Left cardiac atrium (tissue), 4 donors: ENCODE measurements at regions of chr9 and their contacts with region 1.

Region 1: DNA sequence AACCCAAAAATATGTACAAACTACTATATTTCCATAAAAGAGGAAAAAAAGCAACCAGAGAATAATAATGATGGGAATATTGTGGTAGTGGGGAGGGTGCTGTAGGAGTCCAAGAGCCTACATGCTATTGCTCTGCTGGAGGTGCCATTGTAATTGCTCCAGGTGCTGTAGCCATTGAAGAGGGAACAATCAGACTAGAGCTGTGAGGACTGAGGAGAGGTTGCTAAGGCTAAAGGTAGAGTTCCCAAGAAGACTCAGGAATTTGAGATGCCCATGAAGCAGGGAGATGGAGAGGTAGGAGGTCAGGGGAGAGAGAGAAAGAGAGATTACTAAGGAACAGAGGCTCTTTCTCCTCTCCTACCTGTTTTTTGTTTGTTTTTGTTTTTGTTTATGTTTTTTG is 394.0 kb downstream of the DMRTA1 start:
- DNase-seq: no peak
- ATAC-seq: no peak

Region 2: DNA sequence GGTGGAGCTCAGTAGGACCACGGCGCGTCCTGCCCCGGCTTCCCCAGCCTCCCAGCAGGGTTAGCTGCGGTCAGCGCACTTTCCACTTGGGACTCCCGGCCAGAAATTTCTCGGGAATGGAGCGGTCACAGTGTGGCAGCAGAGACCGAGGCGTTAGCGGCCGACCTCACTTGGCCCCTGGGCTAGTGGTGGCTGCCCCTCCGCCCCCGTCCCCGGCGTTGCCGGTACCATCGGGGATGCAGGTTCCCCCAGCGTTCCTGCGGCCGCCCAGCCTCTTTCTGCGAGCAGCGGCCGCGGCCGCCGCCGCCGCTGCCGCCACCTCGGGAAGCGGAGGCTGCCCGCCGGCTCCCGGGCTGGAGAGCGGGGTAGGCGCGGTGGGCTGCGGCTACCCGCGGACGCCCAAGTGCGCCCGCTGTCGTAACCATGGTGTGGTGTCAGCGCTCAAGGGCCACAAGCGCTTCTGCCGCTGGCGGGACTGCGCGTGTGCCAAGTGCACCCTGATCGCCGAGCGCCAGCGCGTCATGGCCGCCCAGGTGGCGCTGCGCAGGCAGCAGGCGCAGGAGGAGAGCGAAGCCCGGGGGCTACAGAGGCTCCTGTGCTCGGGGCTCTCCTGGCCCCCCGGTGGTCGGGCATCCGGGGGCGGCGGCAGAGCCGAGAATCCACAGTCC is 393.6 kb before region 1 on chr9:
- intact Hi-C with region 1: no loop called
- DNase-seq: peak; percentile 55
- ATAC-seq: peak; percentile 84 to 92

Region 3: GRCh38 chr9:22790329-22790728 is 50.3 kb before region 1 on chr9:
- intact Hi-C with region 1: loop called in 1 of 2 experiments (anchors 10 kb)
- DNase-seq: no peak
- ATAC-seq: no peak